ENCODE measurements at regions of chr2 and their contacts with region 1.

Region 1: DNA sequence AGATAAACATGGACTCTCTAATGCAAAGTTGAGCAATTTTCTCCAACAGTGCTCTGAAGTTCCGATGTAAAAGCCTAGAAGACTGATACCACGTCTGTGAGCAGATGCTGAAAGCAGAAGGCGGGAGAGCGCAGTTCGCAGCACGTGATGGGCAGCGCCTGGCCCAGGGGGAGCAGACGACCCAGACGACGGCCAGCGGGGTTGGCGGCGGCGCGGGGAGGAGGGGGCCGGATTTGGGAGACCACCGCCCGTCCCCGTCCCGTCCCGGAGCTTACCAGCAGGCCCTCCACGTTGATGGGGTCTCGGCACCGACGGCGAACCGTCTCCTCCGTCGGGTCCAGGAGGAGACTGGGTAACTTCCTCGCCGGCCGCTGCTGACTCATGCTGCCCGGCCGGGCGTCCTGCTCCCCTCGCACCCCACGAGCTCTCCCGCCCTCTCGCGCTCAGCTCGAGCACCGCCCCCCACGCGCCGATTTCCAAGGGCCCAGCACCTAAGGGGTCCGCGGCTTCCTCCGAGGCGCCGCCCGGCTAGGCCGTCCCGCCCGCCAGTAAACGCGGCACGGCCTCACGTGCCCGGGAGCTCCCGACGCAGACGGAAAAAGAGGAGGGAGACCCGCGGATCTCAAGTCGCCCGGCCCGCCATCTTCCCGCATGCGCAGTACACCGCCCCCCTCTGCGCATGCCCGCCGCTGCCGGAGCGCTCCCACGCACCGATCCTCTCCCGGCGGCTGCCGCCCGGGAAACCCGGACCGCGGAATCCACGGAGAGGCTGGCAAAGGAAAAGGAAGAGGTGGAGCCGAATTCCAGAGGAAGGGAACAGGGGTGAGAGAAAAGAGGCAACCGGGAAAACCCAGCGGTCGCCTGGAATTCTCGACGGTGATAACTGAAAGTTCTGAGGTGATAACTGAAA is at the start of gene E2F6:
- DNase-seq: peak; percentile 82
- H3K4me3 Mint-ChIP-seq: peak within 1 kb of the TSS; percentile 86
- H3K27ac Mint-ChIP-seq: peak within 1 kb of the TSS; percentile 92
- H3K4me1 Mint-ChIP-seq: peaks cover 34% of the 10 kb centered on the region
- H3K27me3 Mint-ChIP-seq: no peaks in the 10 kb centered on the region
- total RNA-seq, gene E2F6: 22.1 and 23.7 TPM in 2 replicates

Region 2: GRCh38 chr2:10812362-10813162 is 653.2 kb before region 1 on chr2 and contains the start of gene PDIA6:
- intact Hi-C with region 1: loop called (anchors 2 kb)
- DNase-seq: peak; percentile 95
- H3K4me3 Mint-ChIP-seq: peak within 1 kb of the TSS; percentile 92
- H3K27ac Mint-ChIP-seq: peak within 1 kb of the TSS; percentile 91
- H3K4me1 Mint-ChIP-seq: peaks cover 31% of the 10 kb centered on the region
- H3K27me3 Mint-ChIP-seq: peaks cover 13% of the 10 kb centered on the region
- total RNA-seq, gene PDIA6: 171 and 173 TPM in 2 replicates

Region 3: DNA sequence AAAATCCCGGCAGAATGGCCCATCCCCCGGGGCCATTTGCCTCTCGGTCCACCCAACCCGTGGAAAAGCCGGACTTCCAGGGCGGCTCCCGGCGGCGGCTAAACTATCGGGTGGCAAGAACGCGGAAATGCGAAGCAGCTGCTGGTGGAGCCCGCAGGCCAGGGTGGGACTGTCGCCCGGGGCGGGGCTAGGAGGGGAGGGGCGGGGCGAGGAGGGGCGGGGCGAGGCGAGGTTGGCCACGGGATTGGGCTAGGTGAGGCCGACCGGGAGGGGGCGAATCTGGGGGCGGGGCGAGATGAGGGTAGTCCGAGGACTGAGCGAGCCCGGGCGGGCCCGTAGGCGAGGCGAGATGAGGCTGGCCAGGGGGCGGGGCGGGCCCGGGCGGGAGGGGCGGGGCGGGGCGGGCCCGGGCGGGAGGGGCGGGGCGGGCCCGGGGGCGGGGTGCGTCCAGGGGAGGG is 310.8 kb before region 1 on chr2:
- intact Hi-C with region 1: loop called (anchors 1 kb)
- DNase-seq: peak; percentile 94
- H3K4me3 Mint-ChIP-seq: peak overlapping the region; percentile 85
- H3K27ac Mint-ChIP-seq: peak overlapping the region; percentile 83
- H3K4me1 Mint-ChIP-seq: peaks cover 12% of the 10 kb centered on the region
- H3K27me3 Mint-ChIP-seq: peaks cover 7% of the 10 kb centered on the region

Region 4: GRCh38 chr2:11344342-11344955 is 121.3 kb before region 1 on chr2 and contains the start of gene ROCK2:
- intact Hi-C with region 1: loop called (anchors 1 kb)
- DNase-seq: peak; percentile 62
- H3K4me3 Mint-ChIP-seq: peak within 1 kb of the TSS; percentile 99
- H3K27ac Mint-ChIP-seq: peak within 1 kb of the TSS; percentile 95
- H3K4me1 Mint-ChIP-seq: peaks cover 35% of the 10 kb centered on the region
- H3K27me3 Mint-ChIP-seq: peaks cover 14% of the 10 kb centered on the region
- total RNA-seq, gene ROCK2: 20.5 and 21.7 TPM in 2 replicates

Region 5: GRCh38 chr2:11477994-11478393 is 12.2 kb after region 1 on chr2:
- intact Hi-C with region 1: loop called (anchors 1 kb)
- DNase-seq: peak; percentile 56
- H3K4me3 Mint-ChIP-seq: no peak overlapping the region
- H3K27ac Mint-ChIP-seq: no peak overlapping the region
- H3K4me1 Mint-ChIP-seq: no peaks in the 10 kb centered on the region
- H3K27me3 Mint-ChIP-seq: peaks cover 30% of the 10 kb centered on the region

Region 6: DNA sequence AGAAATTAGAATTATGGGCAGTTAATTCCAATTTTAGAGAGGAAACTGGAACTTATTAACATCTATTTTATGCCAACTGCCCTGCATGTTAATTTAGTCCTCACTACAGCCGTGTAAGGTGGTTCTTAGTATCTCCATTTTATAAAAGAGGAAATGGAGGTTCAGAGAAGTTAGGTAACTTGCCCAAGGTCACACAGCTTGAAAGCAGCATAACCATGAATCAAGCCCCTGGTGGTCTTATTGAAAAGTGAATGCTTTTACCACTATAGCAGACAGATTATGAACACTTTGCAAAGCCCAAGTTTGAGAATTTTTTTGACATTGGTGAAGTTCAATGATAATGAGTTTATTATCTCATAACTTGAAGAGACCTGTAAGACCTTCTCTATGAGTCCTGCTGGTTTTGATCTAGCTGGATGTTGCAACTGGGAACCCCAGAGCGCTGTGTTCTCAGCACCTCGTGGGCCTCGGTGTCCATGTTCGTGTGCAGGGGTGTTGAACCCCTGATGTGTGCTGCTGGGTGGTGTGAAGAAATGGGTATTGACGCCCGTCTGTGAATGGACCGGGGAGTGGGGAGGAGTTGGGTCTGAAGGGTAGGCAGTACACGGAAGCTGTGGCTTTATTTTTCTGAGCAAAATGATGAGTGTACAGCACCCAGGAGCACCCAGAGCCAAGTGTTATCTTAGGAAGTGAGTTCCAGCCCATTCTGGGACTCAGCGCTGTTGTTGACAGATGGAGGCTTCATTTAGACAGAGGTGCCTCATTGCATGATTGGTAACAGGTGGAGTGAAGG is 77.8 kb after region 1 on chr2:
- intact Hi-C with region 1: no loop called
- DNase-seq: no peak
- H3K4me3 Mint-ChIP-seq: no peak overlapping the region
- H3K27ac Mint-ChIP-seq: no peak overlapping the region
- H3K4me1 Mint-ChIP-seq: no peaks in the 10 kb centered on the region
- H3K27me3 Mint-ChIP-seq: peaks cover 16% of the 10 kb centered on the region

Region 7: GRCh38 chr2:11652553-11652952 is 186.8 kb after region 1 on chr2:
- intact Hi-C with region 1: no loop called
- DNase-seq: no peak
- H3K4me3 Mint-ChIP-seq: no peak overlapping the region
- H3K27ac Mint-ChIP-seq: no peak overlapping the region
- H3K4me1 Mint-ChIP-seq: no peaks in the 10 kb centered on the region
- H3K27me3 Mint-ChIP-seq: peaks cover 5% of the 10 kb centered on the region

Region 8: GRCh38 chr2:11743846-11744553 is 278.2 kb after region 1 on chr2:
- intact Hi-C with region 1: loop called (anchors 1 kb)
- DNase-seq: peak; percentile 67
- H3K4me3 Mint-ChIP-seq: peak overlapping the region; percentile 0
- H3K27ac Mint-ChIP-seq: peak overlapping the region; percentile 79
- H3K4me1 Mint-ChIP-seq: peaks cover 55% of the 10 kb centered on the region
- H3K27me3 Mint-ChIP-seq: peaks cover 3% of the 10 kb centered on the region

Region 9: GRCh38 chr2:11778923-11779757 is 313.4 kb after region 1 on chr2:
- intact Hi-C with region 1: no loop called
- DNase-seq: peak; percentile 75
- H3K4me3 Mint-ChIP-seq: peak overlapping the region; percentile 76
- H3K27ac Mint-ChIP-seq: peak overlapping the region; percentile 80
- H3K4me1 Mint-ChIP-seq: peaks cover 46% of the 10 kb centered on the region
- H3K27me3 Mint-ChIP-seq: no peaks in the 10 kb centered on the region